ENCODE measurements at regions of chr2 and their contacts with region 1.

Region 1: GRCh38 chr2:61910603-61911002 is 5.1 kb downstream of the COMMD1 start:
- DNase-seq: peak; percentile 57
- ATAC-seq: no peak
- H3K4me3 ChIP-seq: no peak overlapping the region
- H3K27ac ChIP-seq: no peak overlapping the region
- H3K4me1 ChIP-seq: peaks cover 6% of the 10 kb centered on the region; the same call in 1 of the 2 replicates
- H3K27me3 ChIP-seq: no peaks in the 10 kb centered on the region
- CTCF ChIP-seq: peak; percentile 56

Region 2: DNA sequence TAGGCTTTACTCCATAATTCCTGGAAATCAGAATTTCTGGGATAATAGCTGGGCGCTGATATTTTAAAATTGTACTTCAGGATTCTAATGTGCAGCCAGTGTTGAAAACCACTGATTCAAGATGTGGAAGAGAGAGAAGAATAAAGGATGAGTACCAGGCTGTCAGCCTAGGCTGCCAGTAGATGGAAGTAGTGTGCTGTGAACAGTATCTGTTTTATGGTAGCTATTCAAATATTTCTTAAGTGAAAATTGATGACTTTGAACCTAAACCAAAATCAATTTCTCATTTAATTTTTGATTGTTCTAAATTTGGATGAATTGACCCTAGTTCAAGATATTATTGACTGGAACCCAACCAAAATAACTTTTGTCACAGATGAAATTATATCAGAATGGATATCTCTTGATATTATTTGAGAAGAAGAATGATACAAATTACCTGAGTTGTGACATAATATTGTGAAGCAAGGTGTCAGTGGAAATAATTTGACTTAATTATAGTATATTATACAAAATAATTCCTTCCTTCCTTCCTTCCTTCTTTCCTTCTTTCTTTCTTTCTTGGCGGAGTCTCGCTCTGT is 82.9 kb after region 1 on chr2:
- CTCF ChIA-PET with region 1: no interaction called
- POLR2A ChIA-PET with region 1: no interaction called
- intact Hi-C with region 1: loop called (anchors 5 kb)
- DNase-seq: peak; percentile 68
- ATAC-seq: peak; percentile 80
- H3K4me3 ChIP-seq: no peak overlapping the region
- H3K27ac ChIP-seq: no peak overlapping the region
- H3K4me1 ChIP-seq: no peaks in the 10 kb centered on the region
- H3K27me3 ChIP-seq: no peaks in the 10 kb centered on the region
- CTCF ChIP-seq: peak; percentile 89

Region 3: GRCh38 chr2:62014102-62014501 is 103.5 kb after region 1 on chr2:
- CTCF ChIA-PET with region 1: no interaction called
- POLR2A ChIA-PET with region 1: no interaction called
- intact Hi-C with region 1: no loop called
- DNase-seq: peak; percentile 6
- ATAC-seq: peak; percentile 88
- H3K4me3 ChIP-seq: no peak overlapping the region
- H3K27ac ChIP-seq: no peak overlapping the region
- H3K4me1 ChIP-seq: no peaks in the 10 kb centered on the region
- H3K27me3 ChIP-seq: no peaks in the 10 kb centered on the region
- CTCF ChIP-seq: no peak